ENCODE measurements at regions of chrX and their contacts with region 1.

Region 1: GRCh38 chrX:45621376-45622041 is 420.8 kb upstream of the DIPK2B start:
- DNase-seq: no peak
- ATAC-seq: no peak
- H3K4me3 Mint-ChIP-seq: no peak overlapping the region
- H3K27ac Mint-ChIP-seq: 0 out of 2 replicates have a peak overlapping the region, but pooled peaks have one; percentile 15
- H3K4me1 Mint-ChIP-seq: peaks cover 25% of the 10 kb centered on the region
- H3K27me3 Mint-ChIP-seq: no peaks in the 10 kb centered on the region
- CTCF ChIP-seq: no peak

Region 2: GRCh38 chrX:45632506-45632905 is 11.0 kb after region 1 on chrX:
- CTCF ChIA-PET with region 1: interaction called, 10 read pairs
- POLR2A ChIA-PET with region 1: no interaction called
- DNase-seq: peak; percentile 12
- ATAC-seq: no peak
- H3K4me3 Mint-ChIP-seq: no peak overlapping the region
- H3K27ac Mint-ChIP-seq: no peak overlapping the region
- H3K4me1 Mint-ChIP-seq: no peaks in the 10 kb centered on the region
- H3K27me3 Mint-ChIP-seq: no peaks in the 10 kb centered on the region
- CTCF ChIP-seq: no peak